RWPE1 (cell line): ENCODE measurements at regions of chr12 and their contacts with region 1.

Region 1: DNA sequence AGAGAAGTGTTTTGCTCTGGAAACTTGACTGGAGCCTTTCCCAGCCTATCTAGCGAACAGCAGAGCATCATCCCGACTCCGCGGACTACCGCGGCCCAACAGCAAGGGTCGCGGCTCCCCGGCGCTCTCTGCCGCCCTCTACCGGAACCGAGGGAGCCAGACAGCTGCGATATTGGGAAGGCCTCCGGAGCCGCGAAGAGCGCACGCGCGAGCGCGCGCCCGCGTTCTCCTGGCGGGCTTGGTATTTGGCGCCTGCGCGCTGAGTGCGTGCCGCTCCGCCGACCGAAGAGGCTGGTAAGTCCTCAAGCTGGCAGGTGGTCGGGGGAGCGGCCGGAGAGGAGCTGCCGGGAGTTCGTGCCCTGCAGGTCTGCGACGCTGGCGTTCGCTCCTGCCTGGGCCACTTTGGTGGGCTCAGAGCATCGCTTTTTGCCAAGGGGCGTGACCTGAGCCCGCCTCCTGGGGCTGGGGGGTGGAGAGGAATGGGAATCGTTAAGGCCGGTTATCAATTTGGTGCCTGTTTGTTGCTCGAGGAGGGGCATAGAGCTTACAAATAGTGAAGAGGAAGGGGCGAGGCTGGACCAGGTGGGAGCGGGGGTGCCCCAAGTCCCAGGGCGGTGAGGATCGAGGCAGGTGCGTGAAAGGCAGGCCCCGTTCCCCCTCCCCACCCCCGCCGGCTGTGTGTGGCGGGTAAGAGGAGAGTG is at the start of gene TMEM106C:
- DNase-seq: peak; percentile 97
- H3K27ac ChIP-seq: peak within 1 kb of the TSS; percentile 47
- CTCF ChIP-seq: peak; percentile 98

Region 2: GRCh38 chr12:47949441-47950308 is 13.8 kb before region 1 on chr12:
- CTCF ChIA-PET with region 1: interaction called, 11 read pairs
- POLR2A ChIA-PET with region 1: no interaction called
- DNase-seq: peak; percentile 84
- H3K27ac ChIP-seq: peak overlapping the region; percentile 56
- CTCF ChIP-seq: peak; percentile 90

Region 3: DNA sequence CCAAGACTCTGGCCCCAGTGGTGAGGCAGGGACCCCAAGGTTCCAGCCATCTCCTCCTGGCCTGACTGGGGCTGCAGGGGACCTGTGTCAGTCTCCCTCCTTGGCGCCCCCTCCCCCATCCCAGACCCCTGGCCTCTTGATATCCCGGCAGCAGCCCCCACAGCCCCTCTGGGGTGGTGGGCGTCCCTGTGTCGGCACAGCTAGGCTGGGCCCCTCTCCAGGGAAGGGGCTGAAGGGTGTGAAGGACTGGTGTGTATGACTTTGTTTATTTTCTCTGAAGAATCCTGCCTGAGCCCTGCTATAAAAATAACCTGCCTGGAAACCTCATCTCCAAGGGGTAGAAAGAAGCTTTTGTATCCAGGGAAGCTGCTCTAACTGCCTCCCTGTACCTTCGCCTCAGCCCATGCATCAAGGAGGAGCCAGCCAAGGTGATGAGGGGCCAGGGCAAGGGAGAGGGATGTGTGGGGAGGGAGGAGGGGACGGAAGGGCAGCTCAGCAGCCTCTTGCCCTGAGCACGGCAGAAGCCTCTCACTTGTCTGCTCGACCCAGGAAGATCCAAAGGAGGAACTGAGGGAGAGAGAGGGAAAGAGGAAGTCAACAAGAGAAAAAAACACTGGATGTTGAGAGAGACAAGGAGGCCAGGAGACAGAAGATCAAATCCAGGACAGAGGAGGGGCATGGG is 66.1 kb after region 1 on chr12:
- CTCF ChIA-PET with region 1: no interaction called
- POLR2A ChIA-PET with region 1: no interaction called
- DNase-seq: no peak
- H3K27ac ChIP-seq: no peak overlapping the region
- CTCF ChIP-seq: no peak